ENCODE measurements at regions of chr19 and their contacts with region 1.

Region 1: DNA sequence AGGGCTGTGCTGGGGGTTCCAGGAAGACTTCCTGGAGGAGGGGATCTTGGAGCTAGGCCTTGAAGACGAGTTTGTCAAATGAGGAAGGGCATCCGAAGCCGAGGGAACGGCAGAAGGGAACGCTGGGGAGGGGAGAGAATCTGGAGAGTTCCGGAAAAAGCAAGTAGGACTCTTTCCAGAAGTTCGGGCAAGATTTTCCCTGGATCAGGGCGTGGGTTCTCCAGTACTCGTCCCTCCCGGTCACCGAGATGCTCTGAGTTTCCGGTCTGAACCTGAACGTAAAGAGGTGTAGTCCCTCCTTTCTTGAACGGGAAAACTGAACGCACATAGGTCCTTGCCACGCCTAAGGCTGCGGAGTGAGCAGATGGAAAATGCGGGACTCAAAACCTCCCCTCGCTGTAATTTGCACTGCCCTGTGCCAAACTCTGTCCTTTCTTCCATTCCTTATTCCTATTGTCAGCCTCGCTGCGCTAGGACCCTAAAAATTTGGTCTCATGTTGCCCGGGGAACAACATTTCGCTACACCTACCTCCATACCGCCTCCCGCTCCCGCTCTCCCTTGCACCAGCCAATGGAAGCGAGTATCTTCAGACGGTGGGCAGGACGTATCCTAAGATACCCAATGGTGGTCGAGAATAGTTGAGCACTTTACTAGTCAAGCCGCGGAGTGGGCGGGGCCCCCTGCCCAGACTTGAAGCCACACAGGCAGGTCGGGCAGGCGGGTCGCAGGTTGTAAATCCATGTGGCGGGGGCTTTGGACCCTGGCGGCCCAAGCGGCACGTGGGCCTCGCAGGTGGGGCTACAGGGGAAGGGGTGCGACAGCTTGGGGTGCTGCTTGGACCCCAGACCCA is at the start of gene GTPBP3:
- DNase-seq: peak; percentile 98
- ATAC-seq: peak; percentile 67
- H3K4me3 Mint-ChIP-seq: peak within 1 kb of the TSS; percentile 99
- H3K27ac Mint-ChIP-seq: peak within 1 kb of the TSS; percentile 99
- H3K4me1 Mint-ChIP-seq: peaks cover 48% of the 10 kb centered on the region
- H3K27me3 Mint-ChIP-seq: peaks cover 2% of the 10 kb centered on the region; the same call in 1 of the 2 replicates
- CTCF ChIP-seq: no peak
- total RNA-seq, gene GTPBP3: 79.1 to 93.0 TPM (median 80.8 TPM) in 3 replicates

Region 2: DNA sequence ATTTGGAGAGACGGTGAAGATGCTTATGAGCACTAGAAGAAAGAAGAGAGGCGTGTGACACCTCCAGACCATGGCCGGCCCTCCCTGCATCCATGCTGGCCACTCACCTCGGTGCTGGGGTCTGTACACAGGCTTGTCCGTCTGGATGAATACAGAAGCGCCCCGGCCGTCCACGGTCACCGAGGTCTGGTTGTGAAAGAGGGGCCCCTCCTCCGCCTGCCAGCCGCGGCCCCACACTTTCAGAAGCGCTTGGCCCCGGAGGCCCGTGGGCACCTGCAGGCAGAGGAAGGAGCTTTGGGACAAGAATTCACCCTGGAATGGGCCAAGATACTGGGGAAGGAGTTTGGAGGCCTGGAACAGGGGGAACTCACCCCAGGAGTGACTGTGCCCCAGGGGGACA is 325.6 kb before region 1 on chr19:
- CTCF ChIA-PET with region 1: no interaction called
- POLR2A ChIA-PET with region 1: no interaction called
- DNase-seq: no peak
- ATAC-seq: no peak
- H3K4me3 Mint-ChIP-seq: no peak overlapping the region
- H3K27ac Mint-ChIP-seq: no peak overlapping the region
- H3K4me1 Mint-ChIP-seq: no peaks in the 10 kb centered on the region
- H3K27me3 Mint-ChIP-seq: no peaks in the 10 kb centered on the region; the same call in 1 of the 2 replicates
- CTCF ChIP-seq: no peak

Region 3: GRCh38 chr19:17305517-17306284 is 31.4 kb before region 1 on chr19 and contains the start of gene MRPL34:
- CTCF ChIA-PET with region 1: interaction called, 13 read pairs
- POLR2A ChIA-PET with region 1: interaction called, 11 read pairs
- DNase-seq: peak; percentile 99
- ATAC-seq: peak; percentile 51
- H3K4me3 Mint-ChIP-seq: peak within 1 kb of the TSS; percentile 89
- H3K27ac Mint-ChIP-seq: peak within 1 kb of the TSS; percentile 91
- H3K4me1 Mint-ChIP-seq: peaks cover 45% of the 10 kb centered on the region
- H3K27me3 Mint-ChIP-seq: no peaks in the 10 kb centered on the region
- CTCF ChIP-seq: no peak; the same call in 1 of the 2 replicates
- total RNA-seq, gene MRPL34: 117 to 130 TPM (median 122 TPM) in 3 replicates

Region 4: GRCh38 chr19:17405250-17406038 is 68.3 kb after region 1 on chr19 and contains the start of gene BST2:
- CTCF ChIA-PET with region 1: no interaction called
- POLR2A ChIA-PET with region 1: no interaction called
- DNase-seq: no peak
- ATAC-seq: peak; percentile 44
- H3K4me3 Mint-ChIP-seq: peak within 1 kb of the TSS; percentile 74
- H3K27ac Mint-ChIP-seq: peak within 1 kb of the TSS; percentile 87
- H3K4me1 Mint-ChIP-seq: peaks cover 32% of the 10 kb centered on the region
- H3K27me3 Mint-ChIP-seq: no peaks in the 10 kb centered on the region
- CTCF ChIP-seq: no peak
- total RNA-seq, gene BST2: 22.8 to 67.7 TPM (median 61.1 TPM) in 3 replicates

Measured in WTC11 (cell line).